ENCODE measurements at regions of chr12 and their contacts with region 1.

Region 1: DNA sequence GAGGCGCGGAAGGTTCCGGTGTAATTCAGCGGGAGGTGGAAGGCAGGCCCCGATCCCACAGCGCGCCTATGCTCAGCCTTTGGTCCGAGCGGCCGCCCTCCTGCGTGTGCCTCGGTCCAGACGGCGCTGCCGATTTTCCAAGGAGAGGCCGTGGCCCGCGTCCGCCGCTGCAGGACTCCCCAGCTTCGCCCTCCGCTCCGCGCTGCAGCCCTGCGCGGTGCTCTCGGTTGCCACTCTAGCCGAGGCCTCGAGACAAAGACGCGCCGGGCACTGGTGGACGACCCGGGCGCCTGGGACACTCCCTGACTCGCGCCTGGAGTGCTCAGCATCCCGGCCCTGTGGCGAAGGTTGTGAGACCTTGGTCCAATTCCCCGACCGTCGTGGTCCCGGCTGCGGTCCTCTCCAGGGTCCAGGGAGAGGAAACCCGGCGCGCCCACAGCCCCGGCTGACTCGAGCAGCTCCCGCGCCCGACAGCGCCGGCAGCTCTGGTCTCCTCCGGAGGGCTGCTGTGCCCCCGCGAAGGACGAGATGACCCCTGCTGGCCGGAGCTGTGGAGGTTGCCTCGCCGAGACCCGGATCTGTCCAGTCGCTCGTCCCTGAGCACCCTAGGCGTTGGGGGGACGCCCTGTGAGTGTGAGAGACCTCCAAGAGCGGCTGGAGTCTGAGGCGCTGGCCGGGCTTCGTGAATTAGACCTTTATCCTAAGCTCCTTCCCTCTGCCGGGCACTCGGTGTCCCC is 6.5 kb downstream of the HOXC12 start:
- DNase-seq: no peak
- ATAC-seq: no peak
- H3K4me3 ChIP-seq: no peak overlapping the region
- H3K4me3 Mint-ChIP-seq: no peak overlapping the region
- H3K27ac ChIP-seq: no peak overlapping the region
- H3K27ac Mint-ChIP-seq: no peak overlapping the region
- H3K4me1 ChIP-seq: peaks cover 30% of the 10 kb centered on the region
- H3K4me1 Mint-ChIP-seq: peaks cover 39% of the 10 kb centered on the region
- H3K27me3 ChIP-seq: peaks cover 69 to 82% of the 10 kb centered on the region in 2 experiments
- H3K27me3 Mint-ChIP-seq: peaks cover 84% of the 10 kb centered on the region
- CTCF ChIP-seq: no peak

Region 2: GRCh38 chr12:52582971-52583456 is 1378.2 kb before region 1 on chr12:
- CTCF ChIA-PET with region 1: no interaction called
- POLR2A ChIA-PET with region 1: no interaction called
- intact Hi-C with region 1: no loop called
- DNase-seq: peak; percentile 48 to 83 (median 70)
- ATAC-seq: peak; percentile 27
- H3K4me3 ChIP-seq: no peak overlapping the region
- H3K4me3 Mint-ChIP-seq: no peak overlapping the region
- H3K27ac ChIP-seq: no peak overlapping the region
- H3K27ac Mint-ChIP-seq: peak overlapping the region; percentile 52
- H3K4me1 ChIP-seq: peaks cover 45% of the 10 kb centered on the region
- H3K4me1 Mint-ChIP-seq: peaks cover 48% of the 10 kb centered on the region
- H3K27me3 ChIP-seq: no peaks in the 10 kb centered on the region
- H3K27me3 Mint-ChIP-seq: peaks cover 3% of the 10 kb centered on the region
- CTCF ChIP-seq: peak; percentile 76

Region 3: GRCh38 chr12:53995378-53996239 is 34.4 kb after region 1 on chr12:
- CTCF ChIA-PET with region 1: no interaction called
- POLR2A ChIA-PET with region 1: no interaction called
- intact Hi-C with region 1: loop called in 1 of 2 experiments (anchors 5 kb)
- DNase-seq: peak in 2 of 9 experiments; percentile 41 to 59
- ATAC-seq: peak; percentile 41
- H3K4me3 ChIP-seq: peak overlapping the region; percentile 56 to 58
- H3K4me3 Mint-ChIP-seq: peak overlapping the region; percentile 80
- H3K27ac ChIP-seq: no peak overlapping the region
- H3K27ac Mint-ChIP-seq: no peak overlapping the region
- H3K4me1 ChIP-seq: peaks cover 49% of the 10 kb centered on the region
- H3K4me1 Mint-ChIP-seq: peaks cover 38% of the 10 kb centered on the region
- H3K27me3 ChIP-seq: peaks cover 82 to 93% of the 10 kb centered on the region in 2 experiments
- H3K27me3 Mint-ChIP-seq: peaks cover 86% of the 10 kb centered on the region
- CTCF ChIP-seq: no peak